ENCODE measurements at regions of chr5 and their contacts with region 1.

Region 1: GRCh38 chr5:159915904-159916840 is at the start of gene ADRA1B:
- DNase-seq: peak; percentile 49 to 94 (median 68)

Region 2: DNA sequence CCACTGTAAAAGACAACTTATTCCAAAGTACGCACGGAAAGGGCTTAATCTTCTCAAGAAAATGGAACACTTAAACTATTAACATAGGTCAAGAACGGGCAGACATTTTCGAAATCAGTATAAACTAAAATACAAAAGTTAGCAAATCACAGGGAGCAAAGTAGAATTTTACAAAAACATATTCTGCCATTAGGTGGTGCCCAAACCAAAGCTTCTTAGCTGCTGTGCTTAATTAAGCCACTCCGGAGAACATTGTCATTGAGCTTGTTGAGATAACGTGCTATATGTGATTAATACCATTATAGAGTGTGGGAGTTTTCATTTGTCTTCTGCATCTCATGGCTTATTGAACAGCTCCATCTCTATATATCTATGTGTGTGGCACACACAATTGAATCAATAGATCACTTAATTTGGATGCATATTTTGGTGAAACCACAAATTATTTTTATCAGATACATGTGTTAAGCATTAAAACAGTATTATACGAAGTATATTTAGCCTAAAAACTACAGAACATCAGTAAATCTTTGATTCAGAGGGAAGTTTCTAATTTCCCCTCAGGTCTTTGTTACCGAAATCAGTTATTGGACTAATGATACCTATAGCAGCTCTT is 629.6 kb before region 1 on chr5:
- intact Hi-C with region 1: loop called (anchors 5 kb)
- DNase-seq: no peak

Region 3: GRCh38 chr5:159331093-159331973 is 584.8 kb before region 1 on chr5:
- intact Hi-C with region 1: loop called (anchors 5 kb)
- DNase-seq: peak; percentile 24 to 91 (median 60)

Region 4: GRCh38 chr5:159444441-159445082 is 471.6 kb before region 1 on chr5:
- intact Hi-C with region 1: loop called (anchors 1 kb)
- DNase-seq: no peak